Calu3 (cell line): ENCODE measurements at regions of chr9 and their contacts with region 1.

Region 1: GRCh38 chr9:76943054-76943453 is 37.1 kb upstream of the PRUNE2 start:
- DNase-seq: no peak
- H3K4me3 Mint-ChIP-seq: no peak overlapping the region
- H3K27ac Mint-ChIP-seq: no peak overlapping the region
- H3K4me1 Mint-ChIP-seq: no peaks in the 10 kb centered on the region
- H3K27me3 Mint-ChIP-seq: no peaks in the 10 kb centered on the region
- CTCF ChIP-seq: no peak

Region 2: GRCh38 chr9:76717176-76717575 is 225.9 kb before region 1 on chr9:
- CTCF ChIA-PET with region 1: interaction called, 10 read pairs
- intact Hi-C with region 1: no loop called
- DNase-seq: no peak
- H3K4me3 Mint-ChIP-seq: no peak overlapping the region
- H3K27ac Mint-ChIP-seq: no peak overlapping the region
- H3K4me1 Mint-ChIP-seq: no peaks in the 10 kb centered on the region
- H3K27me3 Mint-ChIP-seq: peaks cover 38% of the 10 kb centered on the region
- CTCF ChIP-seq: no peak

Region 3: GRCh38 chr9:77514886-77515711 is 572.0 kb after region 1 on chr9:
- CTCF ChIA-PET with region 1: no interaction called
- intact Hi-C with region 1: no loop called
- DNase-seq: no peak
- H3K4me3 Mint-ChIP-seq: no peak overlapping the region
- H3K27ac Mint-ChIP-seq: no peak overlapping the region
- H3K4me1 Mint-ChIP-seq: no peaks in the 10 kb centered on the region
- H3K27me3 Mint-ChIP-seq: no peaks in the 10 kb centered on the region
- CTCF ChIP-seq: no peak

Region 4: GRCh38 chr9:77575785-77576184 is 632.7 kb after region 1 on chr9:
- CTCF ChIA-PET with region 1: no interaction called
- intact Hi-C with region 1: no loop called
- DNase-seq: peak; percentile 5
- H3K4me3 Mint-ChIP-seq: no peak overlapping the region
- H3K27ac Mint-ChIP-seq: no peak overlapping the region
- H3K4me1 Mint-ChIP-seq: no peaks in the 10 kb centered on the region
- H3K27me3 Mint-ChIP-seq: no peaks in the 10 kb centered on the region
- CTCF ChIP-seq: no peak